HEK293 (cell line): ENCODE measurements at regions of chr5 and their contacts with region 1.

Region 1: DNA sequence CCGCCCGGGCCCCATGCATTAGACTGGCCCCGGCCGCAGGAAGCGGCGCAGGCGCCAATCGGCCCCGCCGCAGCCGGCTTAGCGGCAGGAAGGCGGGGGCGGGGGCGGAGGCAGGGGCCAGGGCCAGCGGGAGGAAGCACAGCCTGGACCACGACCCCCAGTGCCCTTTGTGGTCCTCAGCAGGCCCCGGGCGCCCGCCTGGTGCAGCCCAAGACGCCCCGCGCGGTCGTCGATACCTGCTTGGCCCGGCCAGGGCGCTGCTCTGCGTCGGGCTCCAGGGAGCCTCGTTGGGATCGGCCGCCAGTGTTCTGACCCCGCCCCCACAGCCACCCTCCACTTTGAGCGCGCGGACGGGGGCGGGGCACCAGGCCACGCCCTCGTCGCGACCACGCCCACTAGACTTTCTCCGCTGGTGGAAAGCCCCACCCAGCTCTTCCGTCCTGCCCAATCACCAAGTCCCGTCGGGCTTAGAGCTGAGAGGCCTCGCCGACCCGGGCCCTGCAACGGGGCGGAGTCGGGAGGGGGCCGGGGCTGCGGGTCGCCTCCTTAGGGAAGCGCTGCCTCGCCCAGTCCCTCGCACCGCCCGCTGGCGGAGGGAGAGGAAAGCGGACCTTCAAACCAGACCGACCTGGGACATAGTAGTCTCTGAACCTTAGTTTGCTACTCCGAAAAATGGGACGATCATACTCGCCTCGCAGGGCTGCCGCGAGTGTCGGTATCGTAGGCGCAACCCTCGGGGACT is at the start of gene PDLIM7:
- H3K4me3 ChIP-seq: peak within 1 kb of the TSS; percentile 67
- H3K27ac ChIP-seq: peak within 1 kb of the TSS; percentile 98
- H3K4me1 ChIP-seq: peaks cover 20% of the 10 kb centered on the region
- CTCF ChIP-seq: peak; percentile 27

Region 2: DNA sequence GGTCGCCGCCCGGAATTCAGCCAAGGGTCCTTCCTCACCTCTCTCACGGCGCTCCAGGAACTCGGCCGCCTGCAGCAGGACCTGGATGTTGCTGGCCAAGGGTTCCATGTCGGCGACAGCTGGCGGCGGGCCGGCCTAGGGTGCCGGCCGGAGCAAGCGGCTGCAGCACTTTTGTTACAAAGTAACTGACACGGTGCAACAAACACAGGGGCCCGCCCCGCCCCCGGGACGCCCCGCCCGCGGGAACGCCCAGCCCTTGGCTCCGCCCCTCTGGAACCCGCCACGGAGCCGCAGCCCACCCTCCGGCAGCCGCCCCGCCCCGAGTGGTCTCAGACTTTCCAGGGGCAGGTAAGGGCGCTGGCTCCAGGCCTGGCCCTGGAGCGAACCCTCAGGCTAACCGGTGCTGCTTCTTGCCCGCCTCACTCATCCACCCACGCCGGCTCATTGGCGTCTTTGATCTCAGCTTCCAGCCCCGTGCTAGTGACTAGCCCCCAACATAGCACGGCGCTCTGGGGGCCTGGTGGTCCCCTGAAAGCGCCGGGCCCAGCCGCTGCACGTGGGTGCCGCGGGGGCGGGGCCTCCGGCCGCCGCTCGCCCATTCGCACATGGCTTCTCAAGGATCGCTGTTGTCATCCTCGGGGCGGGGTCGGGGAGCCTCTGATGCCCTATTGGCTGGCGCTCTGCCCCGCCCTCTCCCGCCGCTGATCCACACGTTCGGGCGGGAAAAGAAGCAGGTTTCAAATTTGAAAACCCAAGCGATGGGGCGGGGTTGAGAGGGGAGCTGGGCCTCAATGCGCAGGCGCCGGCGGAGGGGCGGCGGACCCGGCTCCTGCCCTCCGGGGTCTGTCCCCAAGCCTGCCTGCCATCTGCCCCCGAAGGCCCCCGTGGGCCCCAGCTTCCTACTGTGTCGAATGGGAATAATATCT is 185.5 kb before region 1 on chr5 and contains the start of gene MXD3:
- CTCF ChIA-PET with region 1: interaction called, 13 read pairs
- POLR2A ChIA-PET with region 1: interaction called, 5 read pairs
- H3K4me3 ChIP-seq: peak within 1 kb of the TSS; percentile 86
- H3K27ac ChIP-seq: peak within 1 kb of the TSS; percentile 67
- H3K4me1 ChIP-seq: peaks cover 5% of the 10 kb centered on the region
- CTCF ChIP-seq: no peak

Region 3: DNA sequence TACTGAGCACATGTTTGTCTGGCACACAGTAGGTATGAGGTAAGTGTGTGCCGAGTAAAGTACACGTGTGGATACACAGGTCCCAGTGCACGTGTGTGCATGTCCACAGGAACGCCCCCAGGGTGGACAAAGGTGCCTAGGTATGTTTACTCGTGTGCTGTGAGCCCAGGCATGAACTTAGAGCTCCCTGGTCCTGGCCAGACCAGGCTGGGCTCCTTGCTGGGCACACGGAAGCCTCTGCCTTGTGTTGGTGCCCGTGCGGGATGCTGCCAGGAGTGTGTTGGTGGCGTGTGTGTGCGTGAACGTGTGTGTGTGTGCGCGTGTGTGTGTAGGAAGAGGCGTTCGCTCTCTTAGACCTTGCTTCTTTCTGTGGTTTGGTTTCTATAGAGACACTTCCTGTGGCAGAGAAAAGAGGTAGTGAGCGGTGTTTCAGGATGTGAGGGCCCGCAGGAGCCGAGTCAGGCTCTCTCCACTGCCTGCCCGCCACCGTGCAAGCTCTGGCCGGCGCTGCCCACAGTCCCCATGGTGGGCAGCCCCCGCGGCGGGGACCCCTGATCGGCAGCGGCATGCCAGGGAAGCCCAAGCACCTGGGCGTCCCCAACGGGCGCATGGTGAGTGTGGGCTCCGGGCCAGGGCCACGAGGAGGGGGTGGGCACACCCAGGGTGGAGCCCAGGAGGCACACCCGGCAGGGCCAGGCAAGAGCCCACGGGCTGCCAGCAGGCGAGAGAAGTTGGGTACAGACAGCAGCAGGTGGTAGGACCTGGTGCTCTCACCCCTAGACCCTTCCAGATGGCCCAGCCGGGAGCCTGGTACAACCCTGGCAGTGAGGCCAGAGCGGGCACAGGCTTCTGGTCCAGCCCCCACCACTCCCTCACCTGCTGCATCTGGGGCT is 139.8 kb before region 1 on chr5 and contains the start of gene RGS14:
- CTCF ChIA-PET with region 1: no interaction called
- POLR2A ChIA-PET with region 1: no interaction called
- H3K4me3 ChIP-seq: no peak within 1 kb of the TSS
- H3K27ac ChIP-seq: no peak within 1 kb of the TSS
- H3K4me1 ChIP-seq: 0 out of 2 replicates have a peak, but pooled peaks cover under 1% of the 10 kb centered on the region
- CTCF ChIP-seq: no peak

Region 4: DNA sequence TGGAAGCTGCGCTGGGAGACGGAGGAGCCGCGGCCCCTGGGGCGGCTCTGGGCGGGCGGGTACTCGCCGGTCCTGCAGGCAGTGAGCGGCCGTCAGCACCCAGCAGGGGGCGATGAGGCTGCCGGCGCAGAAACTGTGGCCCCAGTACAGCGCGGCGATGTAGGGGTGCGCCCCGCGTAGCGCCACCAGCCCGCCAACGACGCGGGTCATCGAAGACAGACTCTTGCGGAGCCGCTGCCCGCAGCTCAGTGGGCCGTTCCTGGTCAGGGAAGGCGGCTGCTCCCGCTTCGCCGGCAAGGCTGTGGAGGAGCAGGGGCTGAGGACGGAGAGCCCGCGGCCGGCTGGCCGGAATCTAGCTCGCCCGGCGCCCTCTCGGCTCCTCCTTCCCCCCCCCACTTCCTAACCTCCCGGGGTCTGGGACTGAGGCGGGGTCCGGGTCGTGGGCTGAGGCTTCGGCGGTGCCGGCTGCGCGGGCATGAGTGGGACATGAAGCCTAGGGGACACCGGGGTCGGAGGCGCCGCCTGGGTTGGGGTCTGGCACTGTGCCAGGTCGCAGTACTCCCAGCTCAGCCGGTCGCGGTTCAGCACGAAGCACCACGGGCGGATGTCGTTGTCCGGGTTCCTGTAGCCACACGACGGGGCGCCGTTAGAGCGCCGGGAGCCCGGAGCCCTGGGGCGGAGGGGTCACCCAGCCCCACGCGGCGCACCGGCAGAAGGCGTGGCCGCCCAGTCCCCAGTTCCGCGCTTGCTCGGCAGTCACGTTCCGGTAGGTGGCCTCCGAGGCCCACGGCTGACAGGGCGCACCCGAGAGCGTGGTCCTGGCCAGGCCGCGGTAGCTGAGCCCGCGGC is 93.4 kb before region 1 on chr5:
- CTCF ChIA-PET with region 1: interaction called, 54 read pairs
- POLR2A ChIA-PET with region 1: interaction called, 11 read pairs
- H3K4me3 ChIP-seq: peak overlapping the region; percentile 50
- H3K27ac ChIP-seq: peak overlapping the region; percentile 56; the same call in 1 of the 2 replicates
- H3K4me1 ChIP-seq: no peaks in the 10 kb centered on the region
- CTCF ChIP-seq: peak; percentile 97

Region 5: GRCh38 chr5:177473461-177474001 is 23.9 kb before region 1 on chr5 and contains the start of gene DBN1:
- CTCF ChIA-PET with region 1: interaction called, 11 read pairs
- POLR2A ChIA-PET with region 1: interaction called, 106 read pairs
- H3K4me3 ChIP-seq: peak within 1 kb of the TSS; percentile 85
- H3K27ac ChIP-seq: peak within 1 kb of the TSS; percentile 82; the same call in 1 of the 2 replicates
- H3K4me1 ChIP-seq: peaks cover 4% of the 10 kb centered on the region
- CTCF ChIP-seq: no peak

Region 6: GRCh38 chr5:177483994-177484901 is 13.2 kb before region 1 on chr5:
- CTCF ChIA-PET with region 1: interaction called, 20 read pairs
- POLR2A ChIA-PET with region 1: interaction called, 106 read pairs
- H3K4me3 ChIP-seq: no peak overlapping the region
- H3K27ac ChIP-seq: no peak overlapping the region
- H3K4me1 ChIP-seq: no peaks in the 10 kb centered on the region
- CTCF ChIP-seq: no peak

Region 7: GRCh38 chr5:177516604-177517568 is 19.4 kb after region 1 on chr5 and contains the start of gene DDX41:
- CTCF ChIA-PET with region 1: interaction called, 16 read pairs
- POLR2A ChIA-PET with region 1: interaction called, 22 read pairs
- H3K4me3 ChIP-seq: peak within 1 kb of the TSS; percentile 99
- H3K27ac ChIP-seq: peak within 1 kb of the TSS; percentile 62
- H3K4me1 ChIP-seq: no peaks in the 10 kb centered on the region; the same call in 1 of the 2 replicates
- CTCF ChIP-seq: peak; percentile 81

Region 8: GRCh38 chr5:177588413-177588909 is 91.0 kb after region 1 on chr5:
- CTCF ChIA-PET with region 1: no interaction called
- POLR2A ChIA-PET with region 1: no interaction called
- H3K4me3 ChIP-seq: no peak overlapping the region
- H3K27ac ChIP-seq: no peak overlapping the region
- H3K4me1 ChIP-seq: no peaks in the 10 kb centered on the region
- CTCF ChIP-seq: no peak